ENCODE measurements at regions of chr12 and their contacts with region 1.

Region 1: GRCh38 chr12:5796171-5796958 is 148.7 kb downstream of the ANO2 start:
- DNase-seq: peak; percentile 44 to 80 (median 79)
- ATAC-seq: peak; percentile 74 to 76
- H3K4me3 ChIP-seq: no peak overlapping the region
- H3K27ac ChIP-seq: no peak overlapping the region
- H3K4me1 ChIP-seq: no peaks in the 10 kb centered on the region
- H3K27me3 ChIP-seq: no peaks in the 10 kb centered on the region

Region 2: DNA sequence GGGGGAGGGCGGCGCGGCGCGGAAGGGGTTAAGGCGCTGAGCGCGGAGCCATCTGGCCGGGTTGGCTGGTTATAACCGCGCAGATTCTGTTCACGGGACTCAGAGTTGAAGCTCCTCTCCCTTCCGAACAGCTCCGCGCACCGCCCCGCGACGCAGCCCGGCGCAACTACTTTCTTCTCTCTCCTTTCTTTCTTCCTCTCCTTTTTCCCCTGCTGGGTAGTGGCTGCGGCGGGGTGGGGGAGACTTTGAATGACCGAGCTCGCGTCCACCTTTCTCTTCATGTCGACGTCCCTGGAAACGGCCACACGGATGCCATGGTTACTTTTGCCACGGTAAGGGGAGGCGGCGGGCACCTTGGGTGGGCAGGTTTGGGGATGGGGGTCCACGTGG is 364.4 kb before region 1 on chr12 and contains the start of gene NTF3:
- intact Hi-C with region 1: loop called in 1 of 4 experiments (anchors 10 kb)
- DNase-seq: peak; percentile 25 to 75 (median 73)
- ATAC-seq: peak; percentile 59 to 70
- H3K4me3 ChIP-seq: peak within 1 kb of the TSS; percentile 88
- H3K27ac ChIP-seq: no peak within 1 kb of the TSS
- H3K4me1 ChIP-seq: peaks cover 5% of the 10 kb centered on the region
- H3K27me3 ChIP-seq: no peaks in the 10 kb centered on the region
- total RNA-seq, gene NTF3: 0.53 to 1.9 (median 1.3) TPM

Region 3: GRCh38 chr12:5745265-5745888 is 51.0 kb before region 1 on chr12:
- intact Hi-C with region 1: no loop called
- DNase-seq: peak; percentile 77 to 88 (median 81)
- ATAC-seq: peak; percentile 89 to 91
- H3K4me3 ChIP-seq: no peak overlapping the region
- H3K27ac ChIP-seq: no peak overlapping the region
- H3K4me1 ChIP-seq: no peaks in the 10 kb centered on the region
- H3K27me3 ChIP-seq: no peaks in the 10 kb centered on the region

Region 4: GRCh38 chr12:5889381-5890047 is 93.1 kb after region 1 on chr12:
- intact Hi-C with region 1: no loop called
- DNase-seq: no peak
- ATAC-seq: peak in 1 of 2 donors; percentile 20
- H3K4me3 ChIP-seq: no peak overlapping the region
- H3K27ac ChIP-seq: no peak overlapping the region
- H3K4me1 ChIP-seq: no peaks in the 10 kb centered on the region
- H3K27me3 ChIP-seq: no peaks in the 10 kb centered on the region